ENCODE measurements at regions of chr7 and their contacts with region 1.

Region 1: GRCh38 chr7:155380221-155380861 is 77.6 kb upstream of the EN2 start:
- DNase-seq: peak; percentile 85
- H3K4me3 Mint-ChIP-seq: no peak overlapping the region
- H3K27ac Mint-ChIP-seq: no peak overlapping the region
- H3K4me1 Mint-ChIP-seq: peaks cover 10% of the 10 kb centered on the region
- H3K27me3 Mint-ChIP-seq: peaks cover 100% of the 10 kb centered on the region
- CTCF ChIP-seq: peak; percentile 85

Region 2: GRCh38 chr7:155524018-155524616 is 143.8 kb after region 1 on chr7:
- CTCF ChIA-PET with region 1: interaction called, 7 read pairs
- intact Hi-C with region 1: loop called (anchors 1 kb)
- DNase-seq: peak; percentile 17
- H3K4me3 Mint-ChIP-seq: no peak overlapping the region
- H3K27ac Mint-ChIP-seq: no peak overlapping the region
- H3K4me1 Mint-ChIP-seq: no peaks in the 10 kb centered on the region
- H3K27me3 Mint-ChIP-seq: peaks cover 93% of the 10 kb centered on the region
- CTCF ChIP-seq: no peak

Region 3: GRCh38 chr7:155738652-155739537 is 358.6 kb after region 1 on chr7:
- CTCF ChIA-PET with region 1: no interaction called
- intact Hi-C with region 1: loop called (anchors 2 kb)
- DNase-seq: peak; percentile 77
- H3K4me3 Mint-ChIP-seq: no peak overlapping the region
- H3K27ac Mint-ChIP-seq: no peak overlapping the region
- H3K4me1 Mint-ChIP-seq: peaks cover 12% of the 10 kb centered on the region
- H3K27me3 Mint-ChIP-seq: no peaks in the 10 kb centered on the region
- CTCF ChIP-seq: peak; percentile 64

Region 4: DNA sequence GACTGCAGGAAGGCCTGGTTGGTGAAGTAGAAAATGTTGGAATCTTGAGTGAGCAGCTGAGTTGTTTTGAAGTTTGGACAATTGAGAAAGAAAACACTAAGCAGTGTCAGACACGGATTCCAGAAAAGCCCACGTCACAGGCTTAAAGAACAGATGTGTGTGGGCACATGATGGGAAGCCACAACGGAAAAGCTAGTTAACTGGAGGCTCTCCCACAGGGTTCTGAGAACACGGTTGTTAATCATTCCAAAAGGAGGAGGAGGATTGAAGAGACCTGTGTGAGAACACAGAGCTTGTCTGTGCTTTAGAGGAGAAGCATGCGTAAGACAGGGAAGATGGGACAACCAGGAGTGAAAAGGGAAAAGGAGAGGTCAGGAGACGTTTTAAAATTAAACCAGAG is 389.4 kb after region 1 on chr7:
- CTCF ChIA-PET with region 1: interaction called, 8 read pairs
- intact Hi-C with region 1: loop called (anchors 2 kb)
- DNase-seq: no peak
- H3K4me3 Mint-ChIP-seq: no peak overlapping the region
- H3K27ac Mint-ChIP-seq: no peak overlapping the region
- H3K4me1 Mint-ChIP-seq: no peaks in the 10 kb centered on the region
- H3K27me3 Mint-ChIP-seq: no peaks in the 10 kb centered on the region
- CTCF ChIP-seq: no peak

Measured in Calu3 (cell line).